ENCODE measurements at regions of chr16 and their contacts with region 1.

Region 1: GRCh38 chr16:19410435-19411161 is 7.1 kb upstream of the TMC5 start:
- DNase-seq: no peak
- H3K4me3 ChIP-seq: no peak overlapping the region
- H3K27ac ChIP-seq: no peak overlapping the region
- H3K27me3 ChIP-seq: peaks cover 16% of the 10 kb centered on the region
- CTCF ChIP-seq: no peak

Region 2: GRCh38 chr16:19458718-19459379 is 48.3 kb after region 1 on chr16:
- CTCF ChIA-PET with region 1: interaction called, 12 read pairs
- POLR2A ChIA-PET with region 1: no interaction called
- DNase-seq: no peak
- H3K4me3 ChIP-seq: no peak overlapping the region
- H3K27ac ChIP-seq: no peak overlapping the region
- H3K27me3 ChIP-seq: no peaks in the 10 kb centered on the region
- CTCF ChIP-seq: no peak

Measured in AG04450 (cell line).